Aorta (tissue), 5 donors: ENCODE measurements at regions of chr20 and their contacts with region 1.

Region 1: GRCh38 chr20:52637201-52637600 is 335.0 kb upstream of the TSHZ2 start:
- DNase-seq: no peak
- ATAC-seq: no peak
- H3K4me3 ChIP-seq: no peak overlapping the region
- H3K27ac ChIP-seq: no peak overlapping the region
- H3K4me1 ChIP-seq: no peaks in the 10 kb centered on the region
- H3K27me3 ChIP-seq: peaks cover 0 to 1% of the 10 kb centered on the region in 2 donors

Region 2: GRCh38 chr20:52652271-52652670 is 15.1 kb after region 1 on chr20:
- intact Hi-C with region 1: loop called in 1 of 2 experiments (anchors 2 kb)
- DNase-seq: no peak
- ATAC-seq: no peak
- H3K4me3 ChIP-seq: no peak overlapping the region
- H3K27ac ChIP-seq: no peak overlapping the region
- H3K4me1 ChIP-seq: no peaks in the 10 kb centered on the region
- H3K27me3 ChIP-seq: no peaks in the 10 kb centered on the region